Caco-2 (cell line): ENCODE measurements at regions of chr10 and their contacts with region 1.

Region 1: DNA sequence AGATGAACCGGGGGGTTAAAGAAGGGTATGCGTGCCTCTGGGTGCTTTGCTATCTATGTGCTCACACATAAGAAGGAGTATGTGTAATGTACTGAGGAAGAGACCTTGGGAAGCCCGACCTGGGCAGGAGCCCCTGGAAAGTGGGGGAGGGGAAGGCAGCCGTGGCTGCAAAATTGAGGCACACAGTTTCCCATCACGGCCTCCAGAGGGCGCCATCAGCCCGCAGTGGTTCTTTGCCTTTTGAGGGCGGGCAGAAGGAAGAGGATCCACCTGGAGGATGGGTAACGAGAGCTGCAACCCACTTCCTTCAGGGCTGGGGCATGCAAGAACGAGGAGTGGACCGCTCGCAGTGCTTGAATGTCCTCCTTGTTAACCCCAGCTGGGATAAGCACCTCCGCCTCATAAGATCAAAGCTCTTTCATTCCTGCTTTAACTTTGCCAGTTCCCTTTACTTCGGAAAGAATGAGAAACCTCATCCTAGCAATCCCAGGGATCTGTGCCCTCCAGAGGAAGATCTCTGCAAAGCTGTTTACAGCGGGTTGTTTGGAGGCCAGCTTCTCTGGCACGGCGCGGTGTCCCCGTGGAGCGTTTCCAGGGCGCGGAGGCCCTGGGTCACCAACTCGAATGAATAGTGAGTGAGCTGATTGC is 77.9 kb downstream of the PCGF5 start:
- DNase-seq: peak; percentile 71 to 83
- H3K4me3 ChIP-seq: no peak overlapping the region; the same call in 1 of the 2 replicates
- H3K4me3 Mint-ChIP-seq: peak overlapping the region; percentile 41
- H3K27ac Mint-ChIP-seq: no peak overlapping the region
- H3K4me1 ChIP-seq: peaks cover 9% of the 10 kb centered on the region; the same call in 1 of the 2 replicates
- H3K4me1 Mint-ChIP-seq: no peaks in the 10 kb centered on the region
- H3K27me3 ChIP-seq: no peaks in the 10 kb centered on the region; the same call in 1 of the 2 replicates
- H3K27me3 Mint-ChIP-seq: peaks cover 3% of the 10 kb centered on the region
- CTCF ChIP-seq: peak; percentile 87 to 90

Region 2: GRCh38 chr10:91340613-91341362 is 42.4 kb after region 1 on chr10:
- CTCF ChIA-PET with region 1: no interaction called
- POLR2A ChIA-PET with region 1: no interaction called
- intact Hi-C with region 1: no loop called
- DNase-seq: no peak
- H3K4me3 ChIP-seq: no peak overlapping the region
- H3K4me3 Mint-ChIP-seq: no peak overlapping the region
- H3K27ac Mint-ChIP-seq: no peak overlapping the region
- H3K4me1 ChIP-seq: no peaks in the 10 kb centered on the region
- H3K4me1 Mint-ChIP-seq: no peaks in the 10 kb centered on the region
- H3K27me3 ChIP-seq: no peaks in the 10 kb centered on the region
- H3K27me3 Mint-ChIP-seq: peaks cover 6% of the 10 kb centered on the region
- CTCF ChIP-seq: no peak

Region 3: DNA sequence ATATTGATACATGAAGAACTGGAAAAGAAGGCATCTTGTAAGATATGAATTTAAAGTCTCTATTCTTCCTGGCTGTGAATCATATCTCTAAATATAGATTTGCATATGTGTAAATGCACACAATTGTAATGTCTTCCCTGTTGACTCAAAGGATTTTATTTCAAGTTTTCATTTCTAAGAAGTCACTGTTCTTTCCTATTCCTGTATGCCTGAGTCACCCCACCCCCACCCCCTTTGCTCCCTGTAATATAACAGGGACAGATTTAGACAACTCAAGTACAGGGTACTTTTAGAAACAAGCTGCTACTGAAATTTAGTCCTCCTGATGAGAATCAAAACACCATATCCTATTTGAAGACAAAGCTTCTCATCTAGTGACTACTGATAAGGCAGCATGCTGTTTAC is 68.8 kb after region 1 on chr10:
- CTCF ChIA-PET with region 1: interaction called, 13 read pairs
- POLR2A ChIA-PET with region 1: no interaction called
- intact Hi-C with region 1: loop called (anchors 1 kb)
- DNase-seq: no peak
- H3K4me3 ChIP-seq: no peak overlapping the region
- H3K4me3 Mint-ChIP-seq: no peak overlapping the region
- H3K27ac Mint-ChIP-seq: no peak overlapping the region
- H3K4me1 ChIP-seq: no peaks in the 10 kb centered on the region
- H3K4me1 Mint-ChIP-seq: no peaks in the 10 kb centered on the region
- H3K27me3 ChIP-seq: no peaks in the 10 kb centered on the region
- H3K27me3 Mint-ChIP-seq: peaks cover 16% of the 10 kb centered on the region
- CTCF ChIP-seq: no peak

Region 4: DNA sequence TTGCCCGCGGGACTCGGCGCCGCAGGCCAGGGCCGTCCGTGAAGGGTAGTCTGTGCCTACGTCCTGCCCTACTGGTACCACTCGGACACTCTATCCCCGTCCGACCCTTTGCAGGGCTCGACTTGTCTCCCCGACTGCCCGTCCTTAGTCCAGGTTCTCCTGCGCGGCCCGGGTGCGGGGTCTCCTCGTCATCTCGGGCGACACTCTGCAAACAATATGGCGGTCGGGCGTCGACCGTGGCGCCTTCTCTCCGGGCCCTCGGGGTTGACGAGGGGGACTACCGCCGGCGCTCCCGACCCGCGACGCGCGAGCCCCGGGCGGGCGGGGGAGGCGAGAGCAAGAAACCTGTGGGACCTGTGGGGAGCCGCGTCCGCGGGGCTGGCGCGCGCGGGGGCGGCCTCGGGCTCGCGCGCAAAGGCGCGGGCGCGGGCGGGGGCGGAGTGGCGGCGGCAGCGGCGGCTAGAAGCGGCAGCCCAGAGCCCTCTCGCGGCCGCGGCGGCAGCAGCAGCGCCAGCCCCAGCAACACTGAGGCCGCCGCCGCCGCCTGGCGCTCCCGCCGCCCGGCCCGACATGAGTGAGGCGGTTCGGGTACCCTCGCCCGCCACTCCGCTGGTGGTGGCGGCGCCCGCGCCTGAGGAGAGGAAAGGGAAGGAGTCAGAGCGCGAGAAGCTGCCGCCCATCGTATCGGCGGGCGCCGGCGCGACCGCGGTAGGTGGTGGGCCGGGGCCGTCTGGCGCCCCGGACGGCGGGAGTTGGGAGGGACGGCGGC is 111.7 kb after region 1 on chr10 and contains the start of gene HECTD2:
- CTCF ChIA-PET with region 1: no interaction called
- POLR2A ChIA-PET with region 1: no interaction called
- intact Hi-C with region 1: loop called (anchors 5 kb)
- DNase-seq: peak; percentile 75 to 87
- H3K4me3 ChIP-seq: peak within 1 kb of the TSS; percentile 98
- H3K4me3 Mint-ChIP-seq: peak within 1 kb of the TSS; percentile 86
- H3K27ac Mint-ChIP-seq: peak within 1 kb of the TSS; percentile 93
- H3K4me1 ChIP-seq: no peaks in the 10 kb centered on the region
- H3K4me1 Mint-ChIP-seq: no peaks in the 10 kb centered on the region
- H3K27me3 ChIP-seq: no peaks in the 10 kb centered on the region
- H3K27me3 Mint-ChIP-seq: peaks cover 13% of the 10 kb centered on the region
- CTCF ChIP-seq: peak; percentile 12 to 16
- total RNA-seq, gene HECTD2: 1.5 and 2.0 TPM in 2 replicates

Region 5: GRCh38 chr10:91551856-91552255 is 253.5 kb after region 1 on chr10:
- CTCF ChIA-PET with region 1: no interaction called
- POLR2A ChIA-PET with region 1: no interaction called
- intact Hi-C with region 1: loop called (anchors 5 kb)
- DNase-seq: peak in 1 of 2 experiments; percentile 44
- H3K4me3 ChIP-seq: no peak overlapping the region
- H3K4me3 Mint-ChIP-seq: no peak overlapping the region
- H3K27ac Mint-ChIP-seq: no peak overlapping the region
- H3K4me1 ChIP-seq: peaks cover 7% of the 10 kb centered on the region
- H3K4me1 Mint-ChIP-seq: peaks cover 13% of the 10 kb centered on the region
- H3K27me3 ChIP-seq: no peaks in the 10 kb centered on the region
- H3K27me3 Mint-ChIP-seq: peaks cover 3% of the 10 kb centered on the region
- CTCF ChIP-seq: peak in 1 of 2 experiments; percentile 77

Region 6: GRCh38 chr10:91635401-91636400 is 337.4 kb after region 1 on chr10:
- CTCF ChIA-PET with region 1: interaction called, 4 read pairs
- POLR2A ChIA-PET with region 1: no interaction called
- intact Hi-C with region 1: loop called (anchors 1 kb)
- DNase-seq: peak; percentile 55 to 74
- H3K4me3 ChIP-seq: no peak overlapping the region
- H3K4me3 Mint-ChIP-seq: no peak overlapping the region
- H3K27ac Mint-ChIP-seq: no peak overlapping the region
- H3K4me1 ChIP-seq: no peaks in the 10 kb centered on the region
- H3K4me1 Mint-ChIP-seq: no peaks in the 10 kb centered on the region
- H3K27me3 ChIP-seq: no peaks in the 10 kb centered on the region
- H3K27me3 Mint-ChIP-seq: peaks cover 2% of the 10 kb centered on the region
- CTCF ChIP-seq: peak; percentile 76 to 79